CD4-positive, alpha-beta memory T cell (primary cell): ENCODE measurements at regions of chr7 and their contacts with region 1.

Region 1: GRCh38 chr7:22675917-22676343 is 51.1 kb upstream of the IL6 start:
- DNase-seq: peak; percentile 63 to 79 (median 71)
- H3K4me3 ChIP-seq: no peak overlapping the region
- H3K4me3 Mint-ChIP-seq: peak overlapping the region; percentile 29 to 89 (median 54)
- H3K27ac ChIP-seq: no peak overlapping the region
- H3K27ac Mint-ChIP-seq: peak overlapping the region; percentile 3 to 94 (median 80)
- H3K4me1 ChIP-seq: peaks cover 81% of the 10 kb centered on the region
- H3K4me1 Mint-ChIP-seq: peaks cover 50 to 80% (median 69%) of the 10 kb centered on the region in 4 donors
- H3K27me3 ChIP-seq: no peaks in the 10 kb centered on the region
- H3K27me3 Mint-ChIP-seq: no peaks in the 10 kb centered on the region

Region 2: GRCh38 chr7:22569586-22570321 is 106.2 kb before region 1 on chr7:
- CTCF ChIA-PET with region 1: no interaction called
- POLR2A ChIA-PET with region 1: no interaction called
- intact Hi-C with region 1: no loop called
- DNase-seq: no peak
- H3K4me3 ChIP-seq: no peak overlapping the region
- H3K4me3 Mint-ChIP-seq: no peak overlapping the region
- H3K27ac ChIP-seq: no peak overlapping the region
- H3K27ac Mint-ChIP-seq: no peak overlapping the region
- H3K4me1 ChIP-seq: peaks cover 12% of the 10 kb centered on the region
- H3K4me1 Mint-ChIP-seq: peaks cover 11 to 17% (median 16%) of the 10 kb centered on the region in 4 donors
- H3K27me3 ChIP-seq: no peaks in the 10 kb centered on the region
- H3K27me3 Mint-ChIP-seq: peaks cover 7 to 18% of the 10 kb centered on the region in 2 donors

Region 3: GRCh38 chr7:22633954-22634474 is 41.9 kb before region 1 on chr7:
- CTCF ChIA-PET with region 1: no interaction called
- POLR2A ChIA-PET with region 1: no interaction called
- intact Hi-C with region 1: no loop called
- DNase-seq: no peak
- H3K4me3 ChIP-seq: no peak overlapping the region
- H3K4me3 Mint-ChIP-seq: no peak overlapping the region
- H3K27ac ChIP-seq: no peak overlapping the region
- H3K27ac Mint-ChIP-seq: peak overlapping the region in 1 of 7 donors; percentile 16
- H3K4me1 ChIP-seq: no peaks in the 10 kb centered on the region
- H3K4me1 Mint-ChIP-seq: no peaks in the 10 kb centered on the region
- H3K27me3 ChIP-seq: no peaks in the 10 kb centered on the region
- H3K27me3 Mint-ChIP-seq: peaks cover 4 to 7% of the 10 kb centered on the region in 2 donors

Region 4: DNA sequence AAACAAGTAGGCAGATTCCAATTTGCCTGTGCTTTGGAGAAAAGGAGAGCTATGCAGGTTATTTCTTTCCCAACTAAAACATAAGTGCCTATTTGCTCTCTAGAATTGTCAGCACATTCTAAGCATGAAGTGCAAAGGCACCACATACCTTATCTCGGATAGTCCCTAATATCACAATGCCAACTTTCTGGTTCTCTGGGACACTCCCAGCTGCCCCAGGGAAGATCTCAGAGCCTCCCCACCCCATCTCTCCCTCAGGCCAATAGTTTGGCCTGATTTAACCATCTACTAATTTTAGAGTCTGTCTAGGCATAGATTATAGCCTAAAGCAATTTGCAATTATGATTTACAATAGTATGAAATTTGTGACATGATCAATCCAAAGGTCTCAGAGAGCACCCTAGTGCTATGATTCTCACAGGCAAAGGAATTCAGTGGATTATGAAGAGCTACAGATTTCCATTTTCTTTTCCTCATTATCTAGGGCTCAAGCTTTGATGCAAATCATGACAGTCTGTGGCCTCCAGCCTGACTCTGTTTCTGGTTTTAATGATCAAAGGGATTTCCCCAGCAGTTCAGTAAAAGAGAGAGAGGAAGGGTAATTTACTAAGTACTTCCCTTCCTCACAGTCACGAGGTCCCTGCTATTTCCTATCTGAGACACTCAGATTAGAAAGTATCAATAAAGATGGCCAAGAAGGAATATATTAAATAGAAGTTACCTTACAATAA is 22.1 kb after region 1 on chr7:
- CTCF ChIA-PET with region 1: interaction called, 3 read pairs
- POLR2A ChIA-PET with region 1: interaction called, 20 read pairs
- intact Hi-C with region 1: no loop called
- DNase-seq: peak; percentile 24 to 52 (median 28)
- H3K4me3 ChIP-seq: no peak overlapping the region
- H3K4me3 Mint-ChIP-seq: peak overlapping the region in 7 of 8 donors; percentile 13 to 71 (median 41)
- H3K27ac ChIP-seq: peak overlapping the region; percentile 22
- H3K27ac Mint-ChIP-seq: peak overlapping the region in 6 of 7 donors; percentile 13 to 84 (median 52)
- H3K4me1 ChIP-seq: peaks cover 49% of the 10 kb centered on the region
- H3K4me1 Mint-ChIP-seq: peaks cover 38 to 61% (median 50%) of the 10 kb centered on the region in 4 donors
- H3K27me3 ChIP-seq: no peaks in the 10 kb centered on the region
- H3K27me3 Mint-ChIP-seq: peaks cover 0 to 2% of the 10 kb centered on the region in 2 donors